Natural killer cell (primary cell): ENCODE measurements at regions of chr16 and their contacts with region 1.

Region 1: DNA sequence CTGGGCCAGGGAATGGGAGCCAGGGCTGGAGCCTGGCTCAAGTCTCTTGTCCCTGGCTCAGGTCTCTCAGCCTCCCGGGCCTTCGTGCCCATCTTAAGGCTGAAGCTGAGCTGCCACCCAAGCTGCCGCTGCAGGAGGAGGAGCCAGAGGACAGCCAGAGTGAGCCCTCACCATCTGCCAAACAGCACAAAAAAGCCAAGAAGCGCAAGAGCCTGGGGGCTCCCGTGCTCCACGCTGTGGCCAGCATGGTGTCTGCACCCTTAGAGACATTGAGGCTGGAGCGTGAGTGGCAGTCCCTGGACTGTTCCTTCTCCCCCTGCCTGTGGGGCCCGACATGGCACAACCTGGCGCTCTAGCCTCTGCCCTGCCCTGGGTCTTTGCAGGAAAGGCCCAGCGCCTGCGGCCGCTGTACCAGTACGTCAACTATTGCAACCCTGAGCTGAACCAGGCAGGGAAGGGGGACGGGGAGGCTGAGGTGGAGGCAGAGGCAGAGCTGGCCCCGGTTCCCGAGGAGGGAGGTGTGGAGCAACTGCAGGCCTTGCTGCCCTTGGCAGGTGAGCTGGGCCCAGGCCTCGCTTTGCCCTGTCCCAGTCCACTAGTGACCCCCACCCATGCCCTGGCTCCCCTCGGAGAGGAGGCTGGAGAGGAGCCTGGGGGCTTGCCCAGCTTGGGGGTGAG is 1.3 kb downstream of the C16orf86 start:
- DNase-seq: peak; percentile 72 to 91
- ATAC-seq: peak; percentile 87 to 91 (median 87)
- H3K4me3 ChIP-seq: no peak overlapping the region
- H3K4me3 Mint-ChIP-seq: peak overlapping the region; percentile 35
- H3K27ac ChIP-seq: peak overlapping the region; percentile 50
- H3K27ac Mint-ChIP-seq: peak overlapping the region; percentile 16 to 90
- H3K4me1 ChIP-seq: peaks cover 32% of the 10 kb centered on the region
- H3K4me1 Mint-ChIP-seq: peaks cover 5 to 27% of the 10 kb centered on the region in 2 donors
- H3K27me3 ChIP-seq: no peaks in the 10 kb centered on the region
- H3K27me3 Mint-ChIP-seq: no peaks in the 10 kb centered on the region
- CTCF ChIP-seq: peak; percentile 75

Region 2: DNA sequence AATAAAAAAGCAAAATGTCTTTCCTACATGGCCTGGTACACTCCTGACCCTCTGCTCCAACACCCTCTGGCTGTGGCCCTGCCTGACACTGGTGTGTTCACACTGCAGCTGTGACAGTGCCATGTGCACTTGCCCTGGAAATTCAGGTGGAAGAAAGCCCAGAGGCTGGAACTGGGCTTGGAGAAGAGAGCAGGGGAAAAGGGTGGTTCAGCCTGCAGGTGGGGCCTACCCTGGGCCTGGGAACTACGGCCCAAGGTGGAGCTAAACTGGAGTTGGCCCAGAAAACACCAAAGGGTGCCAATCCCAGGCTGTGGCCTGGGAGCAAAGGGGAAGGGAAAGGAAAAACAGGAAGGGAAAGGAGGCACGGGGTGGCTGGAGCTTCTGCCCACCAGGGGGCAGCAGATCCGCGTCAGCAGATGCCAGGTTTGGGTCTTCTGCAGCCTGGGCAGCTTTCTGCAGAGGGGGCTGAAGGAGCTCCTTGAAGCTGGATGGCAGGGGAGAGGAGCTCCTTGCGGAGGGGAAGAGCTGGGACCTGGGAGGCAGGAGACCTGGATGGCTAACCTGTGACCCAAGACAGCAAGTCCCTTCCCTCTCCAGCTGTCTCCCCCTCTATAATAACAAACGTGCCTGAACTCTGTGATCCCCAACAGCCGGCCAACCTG is 121.1 kb before region 1 on chr16:
- intact Hi-C with region 1: loop called (anchors 1 kb)
- DNase-seq: peak; percentile 71 to 89
- ATAC-seq: peak; percentile 27 to 49 (median 46)
- H3K4me3 ChIP-seq: no peak overlapping the region
- H3K4me3 Mint-ChIP-seq: no peak overlapping the region
- H3K27ac ChIP-seq: peak overlapping the region; percentile 71
- H3K27ac Mint-ChIP-seq: peak overlapping the region; percentile 47 to 53
- H3K4me1 ChIP-seq: peaks cover 46% of the 10 kb centered on the region
- H3K4me1 Mint-ChIP-seq: peaks cover 8 to 41% of the 10 kb centered on the region in 2 donors
- H3K27me3 ChIP-seq: no peaks in the 10 kb centered on the region
- H3K27me3 Mint-ChIP-seq: no peaks in the 10 kb centered on the region
- CTCF ChIP-seq: peak; percentile 98

Region 3: DNA sequence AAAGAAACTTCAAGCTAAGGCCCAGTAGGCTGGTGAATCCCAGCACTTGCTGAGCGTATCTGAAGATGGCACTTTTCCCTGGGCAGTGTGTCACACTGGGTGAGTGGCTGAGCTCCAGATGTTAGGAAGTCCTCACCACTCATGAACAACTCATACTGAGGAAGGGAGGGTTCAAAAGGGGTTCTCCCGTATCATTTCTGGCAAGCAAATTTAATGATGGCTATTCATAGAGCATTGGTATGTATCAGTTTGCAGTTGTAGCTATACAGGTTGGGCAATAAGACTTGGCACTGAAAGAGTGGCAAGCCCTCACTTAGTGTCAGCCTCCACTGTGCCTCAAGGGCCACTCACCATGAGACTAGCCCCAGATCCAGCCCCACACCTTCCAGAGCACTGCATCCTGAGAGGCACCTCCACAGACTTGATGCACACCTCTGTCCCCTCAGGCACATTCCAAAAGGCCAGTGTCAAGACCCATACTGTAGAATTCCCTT is 40.5 kb after region 1 on chr16:
- intact Hi-C with region 1: no loop called
- DNase-seq: no peak
- ATAC-seq: no peak
- H3K4me3 ChIP-seq: no peak overlapping the region
- H3K4me3 Mint-ChIP-seq: no peak overlapping the region
- H3K27ac ChIP-seq: no peak overlapping the region
- H3K27ac Mint-ChIP-seq: no peak overlapping the region
- H3K4me1 ChIP-seq: peaks cover 4% of the 10 kb centered on the region
- H3K4me1 Mint-ChIP-seq: peaks cover 13 to 18% of the 10 kb centered on the region in 2 donors
- H3K27me3 ChIP-seq: no peaks in the 10 kb centered on the region
- H3K27me3 Mint-ChIP-seq: no peaks in the 10 kb centered on the region
- CTCF ChIP-seq: no peak

Region 4: GRCh38 chr16:67719048-67719777 is 51.3 kb after region 1 on chr16 and contains the start of gene GFOD2:
- intact Hi-C with region 1: loop called (anchors 1 kb)
- DNase-seq: peak; percentile 97 to 99
- ATAC-seq: peak; percentile 94 to 97 (median 96)
- H3K4me3 ChIP-seq: peak within 1 kb of the TSS; percentile 62
- H3K4me3 Mint-ChIP-seq: peak within 1 kb of the TSS; percentile 95
- H3K27ac ChIP-seq: peak within 1 kb of the TSS; percentile 84
- H3K27ac Mint-ChIP-seq: peak within 1 kb of the TSS; percentile 92 to 99
- H3K4me1 ChIP-seq: peaks cover 15% of the 10 kb centered on the region
- H3K4me1 Mint-ChIP-seq: peaks cover 26 to 28% of the 10 kb centered on the region in 2 donors
- H3K27me3 ChIP-seq: no peaks in the 10 kb centered on the region
- H3K27me3 Mint-ChIP-seq: no peaks in the 10 kb centered on the region
- CTCF ChIP-seq: no peak
- total RNA-seq, gene GFOD2: 6.5 to 10.9 (median 8.3) TPM

Region 5: DNA sequence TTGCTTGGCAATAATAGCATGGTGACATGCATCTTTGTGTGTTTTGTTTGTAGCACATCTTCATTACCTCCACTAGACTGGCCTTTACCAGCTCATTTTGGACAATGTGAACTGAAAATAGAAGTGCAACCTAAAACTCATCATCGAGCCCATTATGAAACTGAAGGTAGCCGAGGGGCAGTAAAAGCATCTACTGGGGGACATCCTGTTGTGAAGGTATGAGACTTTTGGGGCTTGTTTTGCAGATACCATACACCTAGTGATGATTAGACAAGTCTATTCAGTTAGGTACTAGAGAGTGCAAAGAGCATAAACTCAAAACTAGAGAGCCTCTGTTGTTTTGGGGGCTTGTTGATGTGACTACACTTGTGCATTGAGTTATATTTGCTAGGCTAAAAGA is 458.4 kb after region 1 on chr16:
- intact Hi-C with region 1: no loop called
- DNase-seq: no peak
- ATAC-seq: no peak
- H3K4me3 ChIP-seq: no peak overlapping the region
- H3K4me3 Mint-ChIP-seq: no peak overlapping the region
- H3K27ac ChIP-seq: no peak overlapping the region
- H3K27ac Mint-ChIP-seq: peak overlapping the region; percentile 68 to 78
- H3K4me1 ChIP-seq: peaks cover 23% of the 10 kb centered on the region
- H3K4me1 Mint-ChIP-seq: peaks cover 56 to 60% of the 10 kb centered on the region in 2 donors
- H3K27me3 ChIP-seq: no peaks in the 10 kb centered on the region
- H3K27me3 Mint-ChIP-seq: no peaks in the 10 kb centered on the region
- CTCF ChIP-seq: no peak